Mammary epithelial cell (primary cell): ENCODE measurements at regions of chr13 and their contacts with region 1.

Region 1: GRCh38 chr13:70098669-70099068 is 9.0 kb upstream of the ATXN8OS start:
- DNase-seq: no peak
- H3K4me3 ChIP-seq: no peak overlapping the region
- H3K27ac ChIP-seq: no peak overlapping the region
- H3K4me1 ChIP-seq: no peaks in the 10 kb centered on the region
- H3K27me3 ChIP-seq: peaks cover 3% of the 10 kb centered on the region
- CTCF ChIP-seq: peak; percentile 32 to 56

Region 2: DNA sequence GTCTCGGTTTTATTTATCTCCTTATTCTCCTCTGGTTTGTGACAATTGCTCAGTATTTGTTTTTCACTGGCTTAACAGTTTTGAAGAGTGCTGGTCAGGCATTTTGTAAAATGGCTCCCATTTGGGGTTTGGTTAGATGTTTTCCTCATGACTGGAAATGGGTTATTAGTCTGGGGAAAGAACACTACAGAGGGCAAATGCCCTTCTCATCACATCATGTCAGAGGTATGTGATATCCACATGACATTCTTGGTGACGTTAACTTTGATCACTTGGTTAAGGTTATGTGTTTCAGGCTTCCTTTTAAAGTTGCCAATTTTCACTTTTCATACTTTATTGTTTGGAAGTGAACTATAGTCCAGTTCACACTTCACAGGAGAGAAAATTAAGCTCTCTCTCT is 84.4 kb after region 1 on chr13:
- CTCF ChIA-PET with region 1: no interaction called
- dilution Hi-C with region 1: no loop called
- in situ Hi-C with region 1: no loop called
- intact Hi-C with region 1: no loop called
- DNase-seq: peak; percentile 19
- H3K4me3 ChIP-seq: no peak overlapping the region
- H3K27ac ChIP-seq: no peak overlapping the region
- H3K4me1 ChIP-seq: no peaks in the 10 kb centered on the region
- H3K27me3 ChIP-seq: no peaks in the 10 kb centered on the region
- CTCF ChIP-seq: no peak

Region 3: DNA sequence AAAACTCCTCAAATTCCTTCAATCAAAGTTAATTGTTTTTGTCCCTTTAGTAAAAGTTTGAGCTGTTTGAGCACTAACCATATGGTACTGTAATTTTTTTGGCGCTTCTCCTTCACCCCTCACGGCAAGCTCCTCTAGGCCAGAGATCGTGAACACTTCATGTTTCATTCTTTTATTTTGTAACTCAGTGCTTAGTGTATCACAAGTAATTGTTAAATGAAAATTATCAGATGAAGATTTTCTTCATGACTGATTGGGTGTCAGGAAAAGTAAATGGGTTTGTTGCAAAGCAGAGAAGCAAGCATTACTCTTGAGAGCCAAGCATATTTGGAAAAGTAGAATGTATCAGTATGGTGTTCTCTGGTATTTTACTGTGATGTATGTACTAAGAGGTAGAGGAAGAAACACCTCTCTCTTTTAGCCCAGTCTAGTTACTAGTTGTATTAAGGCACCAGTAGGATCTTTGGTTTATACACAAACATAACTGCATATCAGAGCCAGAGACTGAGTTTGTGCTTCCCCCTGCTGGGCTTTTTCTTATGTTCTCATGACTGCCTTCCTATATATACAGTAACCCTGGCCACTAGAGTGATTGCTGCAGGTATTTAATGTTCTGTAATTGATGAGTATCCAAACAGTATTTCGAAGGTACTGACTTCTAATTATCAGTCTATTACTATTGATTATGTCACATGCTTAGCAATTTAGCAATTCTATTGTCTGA is 211.9 kb after region 1 on chr13:
- CTCF ChIA-PET with region 1: interaction called, 5 read pairs
- dilution Hi-C with region 1: no loop called
- in situ Hi-C with region 1: loop called (anchors 10 kb)
- intact Hi-C with region 1: loop called (anchors 1 kb)
- DNase-seq: peak; percentile 14
- H3K4me3 ChIP-seq: no peak overlapping the region
- H3K27ac ChIP-seq: no peak overlapping the region
- H3K4me1 ChIP-seq: no peaks in the 10 kb centered on the region
- H3K27me3 ChIP-seq: no peaks in the 10 kb centered on the region
- CTCF ChIP-seq: peak; percentile 28 to 65

Region 4: DNA sequence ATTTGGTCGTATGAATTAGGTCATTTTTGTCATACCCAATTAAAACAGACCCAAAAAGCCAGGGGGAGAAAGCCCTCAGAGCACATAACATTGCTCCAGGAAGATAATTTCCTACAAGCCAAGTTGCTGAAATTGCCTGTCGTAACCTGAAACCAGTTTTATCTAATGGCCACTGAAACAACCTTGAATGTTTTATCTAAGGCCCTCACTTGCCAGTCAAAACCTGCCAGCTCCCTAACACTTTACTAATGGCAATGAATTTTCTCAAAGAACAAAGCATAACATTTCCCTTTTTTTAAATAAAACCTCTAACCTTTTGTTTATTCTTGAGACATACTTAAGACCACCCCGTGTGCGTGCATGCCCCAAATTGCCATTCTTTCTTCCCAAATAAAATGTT is 505.8 kb after region 1 on chr13:
- CTCF ChIA-PET with region 1: no interaction called
- dilution Hi-C with region 1: no loop called
- in situ Hi-C with region 1: no loop called
- intact Hi-C with region 1: no loop called
- DNase-seq: no peak
- H3K4me3 ChIP-seq: no peak overlapping the region
- H3K27ac ChIP-seq: no peak overlapping the region
- H3K4me1 ChIP-seq: no peaks in the 10 kb centered on the region
- H3K27me3 ChIP-seq: no peaks in the 10 kb centered on the region
- CTCF ChIP-seq: no peak